IMR-90 (cell line): ENCODE measurements at regions of chr17 and their contacts with region 1.

Region 1: DNA sequence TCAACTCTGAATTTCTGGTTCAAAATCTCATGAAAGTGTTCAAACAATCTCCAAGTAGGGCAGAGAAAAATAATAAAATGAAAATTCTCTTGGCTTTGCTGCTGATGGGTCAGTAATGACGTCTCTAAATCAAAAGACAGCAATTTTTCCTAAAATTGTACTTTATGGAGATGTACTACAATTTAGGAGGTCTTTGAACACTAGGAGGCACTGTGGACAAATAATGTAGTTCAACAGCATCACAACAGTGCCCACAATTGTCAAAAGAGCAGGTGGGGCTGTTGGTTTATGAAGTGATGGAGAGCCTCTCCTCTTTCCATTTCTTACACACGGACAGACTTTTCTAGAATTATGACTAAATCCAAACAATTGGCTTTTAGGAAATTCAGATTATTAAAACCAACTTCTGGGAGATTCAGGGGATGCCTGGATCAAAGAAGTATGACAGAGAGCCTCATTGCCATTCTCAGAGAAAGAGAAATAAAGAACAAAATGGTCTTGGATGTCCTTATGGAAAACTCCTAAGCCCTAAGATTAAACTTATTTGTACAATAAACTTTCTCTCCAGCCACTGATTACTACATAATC is 23.8 kb downstream of the EZH1 start:
- DNase-seq: peak; percentile 71
- ATAC-seq: peak; percentile 90
- H3K4me3 ChIP-seq: no peak overlapping the region
- H3K27ac ChIP-seq: no peak overlapping the region
- H3K4me1 ChIP-seq: no peaks in the 10 kb centered on the region
- H3K27me3 ChIP-seq: no peaks in the 10 kb centered on the region
- CTCF ChIP-seq: peak; percentile 84
- POLR2A ChIP-seq: no peak
- RAD21 ChIP-seq: peak; percentile 69

Region 2: GRCh38 chr17:42819944-42820535 is 99.0 kb after region 1 on chr17:
- CTCF ChIA-PET with region 1: no interaction called
- POLR2A ChIA-PET with region 1: interaction called, 7 read pairs
- dilution Hi-C with region 1: no loop called
- in situ Hi-C with region 1: no loop called
- intact Hi-C with region 1: loop called (anchors 1 kb)
- DNase-seq: peak; percentile 37
- ATAC-seq: no peak
- H3K4me3 ChIP-seq: no peak overlapping the region
- H3K27ac ChIP-seq: no peak overlapping the region
- H3K4me1 ChIP-seq: no peaks in the 10 kb centered on the region; the same call in 1 of the 2 replicates
- H3K27me3 ChIP-seq: no peaks in the 10 kb centered on the region
- CTCF ChIP-seq: peak; percentile 67
- POLR2A ChIP-seq: no peak
- RAD21 ChIP-seq: peak; percentile 36

Region 3: GRCh38 chr17:42937712-42938596 is 216.9 kb after region 1 on chr17:
- CTCF ChIA-PET with region 1: no interaction called
- POLR2A ChIA-PET with region 1: no interaction called
- dilution Hi-C with region 1: no loop called
- in situ Hi-C with region 1: loop called (anchors 10 kb)
- intact Hi-C with region 1: loop called (anchors 1 kb)
- DNase-seq: peak; percentile 64
- ATAC-seq: peak; percentile 91
- H3K4me3 ChIP-seq: no peak overlapping the region
- H3K27ac ChIP-seq: no peak overlapping the region
- H3K4me1 ChIP-seq: no peaks in the 10 kb centered on the region
- H3K27me3 ChIP-seq: peaks cover 20% of the 10 kb centered on the region
- CTCF ChIP-seq: peak; percentile 88
- POLR2A ChIP-seq: no peak
- RAD21 ChIP-seq: peak; percentile 90